Right cardiac atrium (tissue), 5 donors: ENCODE measurements at regions of chr7 and their contacts with region 1.

Region 1: DNA sequence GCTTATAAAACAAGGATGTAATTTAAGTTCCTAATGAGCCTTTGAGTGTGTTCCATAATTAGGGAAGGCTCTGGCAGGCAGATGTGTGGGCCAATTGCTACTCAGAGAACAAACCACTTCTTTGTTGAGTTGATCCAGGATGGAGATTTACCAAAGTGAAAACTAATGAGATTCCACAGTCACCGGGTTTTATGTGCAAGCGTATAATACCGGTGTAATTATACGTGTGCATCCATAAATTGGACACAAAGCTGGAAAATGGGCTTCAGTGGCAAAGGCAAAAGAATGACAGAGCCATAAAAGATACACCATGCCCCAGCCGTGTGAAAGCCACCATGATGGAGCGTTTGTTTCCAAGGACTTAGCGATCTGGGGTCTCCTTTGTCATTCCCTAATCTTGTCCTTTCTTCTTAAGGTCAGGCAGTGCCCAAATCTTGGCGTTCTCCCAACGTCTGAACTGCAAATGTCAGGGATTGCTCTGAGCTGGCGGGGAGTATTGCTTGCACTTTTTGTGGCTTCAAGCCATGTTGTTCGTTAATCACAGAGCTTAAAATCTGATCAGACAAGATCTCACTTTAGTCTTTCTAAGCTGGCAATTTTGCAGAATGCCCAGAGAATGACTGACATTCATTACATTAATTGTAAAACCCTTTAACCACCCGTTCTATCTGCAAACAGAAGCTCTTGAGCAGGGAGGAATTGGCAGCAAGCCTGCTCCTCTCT is 70.2 kb downstream of the NPTX2 start:
- DNase-seq: no peak
- ATAC-seq: no peak
- H3K4me3 ChIP-seq: no peak overlapping the region
- H3K27ac ChIP-seq: no peak overlapping the region
- H3K4me1 ChIP-seq: no peaks in the 10 kb centered on the region
- H3K27me3 ChIP-seq: no peaks in the 10 kb centered on the region

Region 2: DNA sequence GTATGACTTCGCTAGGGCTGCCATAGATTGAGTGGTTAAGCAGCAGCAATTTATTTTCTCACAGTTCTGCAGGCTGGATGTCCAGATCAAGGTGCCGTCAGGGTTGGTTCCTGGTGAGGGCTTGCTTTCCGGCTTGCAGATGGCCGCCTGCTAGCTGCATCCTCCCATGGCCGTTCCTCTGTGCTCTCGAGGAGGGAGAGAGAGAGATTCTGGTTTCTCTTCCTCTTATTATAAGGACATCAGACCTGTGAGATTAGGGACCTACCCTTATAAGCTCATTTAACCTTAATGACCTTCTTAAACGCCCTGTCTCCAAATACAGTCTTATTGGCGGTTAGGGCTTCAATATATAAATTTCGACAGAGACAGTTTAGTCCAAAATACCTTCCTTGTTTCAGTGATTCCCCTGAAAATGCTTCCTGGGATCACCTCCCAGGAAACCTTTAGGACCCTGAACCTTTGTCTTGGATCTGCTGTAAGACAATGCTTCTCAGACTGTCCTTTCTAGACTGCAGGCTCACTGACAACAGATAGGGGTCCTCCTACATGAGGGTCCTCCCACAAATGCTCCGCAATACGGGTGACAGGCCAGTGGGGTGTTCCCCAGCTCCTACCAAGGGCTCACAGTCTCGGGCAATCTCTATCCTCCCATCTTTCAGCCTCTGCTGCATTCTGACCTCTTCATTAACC is 203.8 kb before region 1 on chr7:
- intact Hi-C with region 1: no loop called
- DNase-seq: no peak
- ATAC-seq: no peak
- H3K4me3 ChIP-seq: no peak overlapping the region
- H3K27ac ChIP-seq: no peak overlapping the region
- H3K4me1 ChIP-seq: no peaks in the 10 kb centered on the region
- H3K27me3 ChIP-seq: no peaks in the 10 kb centered on the region

Region 3: GRCh38 chr7:98735801-98736200 is 48.6 kb after region 1 on chr7:
- intact Hi-C with region 1: loop called in 1 of 4 experiments (anchors 5 kb)
- DNase-seq: no peak
- ATAC-seq: no peak
- H3K4me3 ChIP-seq: no peak overlapping the region
- H3K27ac ChIP-seq: no peak overlapping the region
- H3K4me1 ChIP-seq: no peaks in the 10 kb centered on the region
- H3K27me3 ChIP-seq: no peaks in the 10 kb centered on the region